ENCODE measurements at regions of chr16 and their contacts with region 1.

Region 1: DNA sequence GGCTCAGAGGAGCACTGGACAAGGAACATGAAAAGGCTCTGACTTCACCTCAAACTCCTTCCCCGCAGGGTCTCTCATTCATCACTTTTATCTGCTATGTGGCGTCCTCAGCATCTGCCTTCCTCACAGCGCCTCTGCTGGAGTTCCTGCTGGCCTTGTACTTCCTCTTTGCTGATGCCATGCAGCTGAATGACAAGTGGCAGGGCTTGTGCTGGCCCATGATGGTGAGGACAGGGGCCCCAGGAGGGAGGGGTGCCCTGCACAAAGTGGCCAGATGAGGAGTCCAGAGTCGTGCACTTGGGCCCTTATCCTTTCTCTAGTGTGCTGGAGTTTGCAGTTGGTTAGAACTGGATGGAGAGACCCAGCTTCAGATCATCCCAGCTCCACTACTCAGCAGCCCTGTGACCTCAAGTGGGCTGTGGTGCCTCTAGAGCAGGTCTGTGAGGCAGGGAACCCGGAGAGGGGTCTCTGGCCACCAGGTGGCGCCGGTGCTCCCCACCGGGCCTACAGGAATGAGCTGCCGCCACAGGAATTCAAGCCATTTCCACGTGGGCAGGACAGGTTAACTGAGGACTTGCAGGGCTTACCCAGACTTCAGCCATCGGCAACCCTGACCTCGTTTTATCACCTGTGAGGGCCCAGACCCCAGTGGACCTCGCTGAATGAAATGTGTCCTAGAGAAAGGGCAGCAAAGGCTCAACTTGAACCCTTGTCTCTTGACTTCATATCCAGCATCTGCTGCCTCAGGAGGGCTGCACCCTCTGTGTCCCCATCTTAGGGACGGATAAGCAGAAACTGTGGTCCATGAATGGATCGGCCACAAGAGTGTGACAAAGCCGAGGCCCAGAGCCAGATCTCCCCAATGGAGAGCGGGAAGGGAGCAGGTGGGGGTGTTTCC is 4.0 kb downstream of the CMTM3 start:
- DNase-seq: peak; percentile 85 to 93 (median 89)
- H3K4me3 ChIP-seq: no peak overlapping the region
- H3K27ac ChIP-seq: no peak overlapping the region
- H3K4me1 ChIP-seq: peaks cover 4% of the 10 kb centered on the region
- H3K27me3 ChIP-seq: no peaks in the 10 kb centered on the region
- CTCF ChIP-seq: peak; percentile 74 to 89 (median 80)
- EP300 ChIP-seq: no peak
- POLR2A ChIP-seq: no peak

Region 2: DNA sequence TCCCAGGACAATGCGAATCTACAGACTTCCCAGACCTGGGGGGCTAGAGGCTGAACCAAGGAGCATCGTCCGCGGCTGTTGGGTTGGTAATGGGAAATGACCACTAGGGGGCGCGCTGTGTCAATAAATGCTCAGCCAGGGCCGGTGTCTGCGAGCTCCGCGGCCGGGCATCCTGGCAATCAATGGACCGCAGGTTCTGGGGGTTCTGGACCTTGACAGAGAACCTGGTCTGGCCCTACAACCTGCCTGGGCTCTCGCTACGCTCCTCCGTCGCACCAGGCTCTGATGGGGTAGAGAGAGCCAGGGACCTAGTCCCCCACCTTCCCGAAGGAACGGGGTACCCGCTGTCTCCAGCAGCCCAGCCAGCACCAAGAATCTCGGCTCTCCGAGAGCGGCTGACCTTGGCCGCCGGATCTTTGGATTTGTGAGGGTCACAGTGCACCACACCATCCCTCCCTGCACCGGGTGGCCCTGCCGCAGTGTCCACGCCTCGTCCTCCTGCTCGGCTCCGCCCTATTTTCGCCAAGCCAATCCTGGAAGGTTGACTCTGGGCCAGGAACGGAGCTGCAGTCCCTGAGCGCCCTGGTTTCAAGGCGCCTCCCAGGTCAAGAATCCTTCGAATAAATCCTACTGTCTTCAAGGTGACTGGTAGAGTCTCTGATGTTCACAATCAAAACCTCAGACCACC is 201.8 kb before region 1 on chr16:
- intact Hi-C with region 1: loop called in 3 of 4 experiments (anchors 10 kb)
- DNase-seq: peak; percentile 81 to 92 (median 90)
- H3K4me3 ChIP-seq: peak overlapping the region; percentile 41
- H3K27ac ChIP-seq: no peak overlapping the region
- H3K4me1 ChIP-seq: peaks cover 2% of the 10 kb centered on the region
- H3K27me3 ChIP-seq: no peaks in the 10 kb centered on the region
- CTCF ChIP-seq: peak; percentile 84 to 94 (median 93)
- EP300 ChIP-seq: no peak
- POLR2A ChIP-seq: no peak

Region 3: DNA sequence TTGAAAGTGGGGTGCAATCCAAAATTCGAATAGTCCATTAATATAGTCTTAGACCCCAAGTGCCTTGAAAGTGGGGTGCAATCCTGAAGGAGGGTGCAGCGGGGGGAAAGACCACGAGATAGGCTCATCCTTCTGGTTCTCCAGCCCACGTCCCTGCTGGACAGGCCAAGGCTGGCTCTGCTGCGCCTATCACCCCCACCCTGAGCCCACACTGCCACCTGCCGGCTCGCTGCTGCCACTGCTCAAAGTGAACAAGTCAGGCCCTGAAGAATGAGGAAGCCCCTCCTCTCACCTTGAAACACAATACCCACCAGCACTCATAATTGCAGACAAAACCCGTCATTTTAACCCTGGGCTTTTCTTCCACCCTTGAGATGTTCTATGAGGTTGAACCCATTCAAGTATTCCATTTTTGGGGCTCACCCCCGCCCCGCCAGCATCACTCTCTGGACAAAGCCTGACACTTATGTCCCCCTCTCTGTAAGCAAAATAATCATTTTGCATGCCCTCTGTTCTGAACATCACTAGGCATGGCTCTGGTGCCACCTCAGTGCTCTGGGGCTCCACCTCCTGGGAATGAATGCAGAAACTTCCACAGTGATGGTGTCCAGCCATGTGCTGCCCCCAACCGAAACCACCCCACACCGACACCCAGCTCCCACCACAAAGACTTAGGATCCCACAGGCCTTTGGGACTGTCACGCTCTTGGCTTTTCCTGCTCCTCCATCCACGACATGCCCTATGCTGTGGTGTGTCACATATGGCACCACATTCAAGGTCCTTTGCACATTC is 124.6 kb before region 1 on chr16:
- intact Hi-C with region 1: loop called in 2 of 4 experiments (anchors 5 kb)
- DNase-seq: peak; percentile 67 to 85 (median 79)
- H3K4me3 ChIP-seq: no peak overlapping the region
- H3K27ac ChIP-seq: no peak overlapping the region
- H3K4me1 ChIP-seq: no peaks in the 10 kb centered on the region
- H3K27me3 ChIP-seq: no peaks in the 10 kb centered on the region
- CTCF ChIP-seq: peak; percentile 72 to 86 (median 85)
- EP300 ChIP-seq: no peak
- POLR2A ChIP-seq: no peak

Region 4: DNA sequence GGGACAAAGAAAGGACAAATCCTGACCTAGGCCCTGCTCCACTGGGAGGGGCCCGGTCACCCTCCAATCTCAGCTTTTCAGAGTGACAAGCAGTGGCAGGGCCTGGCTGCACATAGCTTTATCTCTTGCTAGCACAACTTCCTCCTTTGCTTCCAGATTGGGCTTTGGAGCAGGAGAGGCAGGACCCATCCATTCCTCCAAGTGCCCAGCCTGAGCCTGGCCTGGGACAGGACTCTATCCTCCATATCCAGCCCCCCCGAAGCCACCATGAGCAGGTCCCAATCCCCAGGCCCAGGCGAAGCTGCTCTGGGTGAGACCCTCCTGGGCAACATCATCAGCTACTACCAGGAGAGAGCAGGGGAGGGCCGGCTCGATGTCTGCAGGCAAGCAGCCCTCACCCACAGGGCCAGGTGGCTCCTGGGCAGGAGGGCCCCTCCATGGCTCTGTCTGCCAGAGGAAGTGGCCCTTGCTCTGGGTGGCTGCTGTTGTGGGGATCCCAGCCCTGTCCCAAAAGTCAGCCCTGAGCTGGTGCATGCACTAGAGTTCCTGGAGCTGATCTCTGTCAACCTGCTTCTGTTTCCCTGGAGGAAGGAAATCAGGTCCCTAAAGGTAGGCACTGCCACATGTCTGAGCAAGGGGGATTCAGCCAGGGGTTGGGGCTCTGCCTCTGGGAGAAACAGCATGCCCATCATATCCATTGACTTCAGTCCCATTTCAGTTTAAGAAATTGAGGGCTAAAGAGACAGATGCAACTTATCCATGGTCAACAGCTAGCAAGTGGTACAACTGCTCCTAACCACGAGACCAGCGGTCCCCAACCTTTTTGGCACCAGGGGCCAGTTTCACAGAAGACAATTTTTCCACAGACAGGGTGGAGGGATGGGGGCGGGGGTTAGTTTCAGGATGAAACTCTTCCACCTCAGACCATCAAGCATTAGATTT is 117.4 kb before region 1 on chr16:
- intact Hi-C with region 1: loop called in 2 of 4 experiments (anchors 5 to 10 kb)
- DNase-seq: peak in 1 of 5 donors; percentile 27
- H3K4me3 ChIP-seq: no peak overlapping the region
- H3K27ac ChIP-seq: no peak overlapping the region
- H3K4me1 ChIP-seq: no peaks in the 10 kb centered on the region
- H3K27me3 ChIP-seq: no peaks in the 10 kb centered on the region
- CTCF ChIP-seq: no peak
- EP300 ChIP-seq: no peak
- POLR2A ChIP-seq: no peak

Region 5: GRCh38 chr16:66541388-66542355 is 66.8 kb before region 1 on chr16:
- intact Hi-C with region 1: no loop called
- DNase-seq: no peak
- H3K4me3 ChIP-seq: no peak overlapping the region
- H3K27ac ChIP-seq: no peak overlapping the region
- H3K4me1 ChIP-seq: no peaks in the 10 kb centered on the region
- H3K27me3 ChIP-seq: no peaks in the 10 kb centered on the region
- CTCF ChIP-seq: no peak
- EP300 ChIP-seq: no peak
- POLR2A ChIP-seq: no peak

Region 6: DNA sequence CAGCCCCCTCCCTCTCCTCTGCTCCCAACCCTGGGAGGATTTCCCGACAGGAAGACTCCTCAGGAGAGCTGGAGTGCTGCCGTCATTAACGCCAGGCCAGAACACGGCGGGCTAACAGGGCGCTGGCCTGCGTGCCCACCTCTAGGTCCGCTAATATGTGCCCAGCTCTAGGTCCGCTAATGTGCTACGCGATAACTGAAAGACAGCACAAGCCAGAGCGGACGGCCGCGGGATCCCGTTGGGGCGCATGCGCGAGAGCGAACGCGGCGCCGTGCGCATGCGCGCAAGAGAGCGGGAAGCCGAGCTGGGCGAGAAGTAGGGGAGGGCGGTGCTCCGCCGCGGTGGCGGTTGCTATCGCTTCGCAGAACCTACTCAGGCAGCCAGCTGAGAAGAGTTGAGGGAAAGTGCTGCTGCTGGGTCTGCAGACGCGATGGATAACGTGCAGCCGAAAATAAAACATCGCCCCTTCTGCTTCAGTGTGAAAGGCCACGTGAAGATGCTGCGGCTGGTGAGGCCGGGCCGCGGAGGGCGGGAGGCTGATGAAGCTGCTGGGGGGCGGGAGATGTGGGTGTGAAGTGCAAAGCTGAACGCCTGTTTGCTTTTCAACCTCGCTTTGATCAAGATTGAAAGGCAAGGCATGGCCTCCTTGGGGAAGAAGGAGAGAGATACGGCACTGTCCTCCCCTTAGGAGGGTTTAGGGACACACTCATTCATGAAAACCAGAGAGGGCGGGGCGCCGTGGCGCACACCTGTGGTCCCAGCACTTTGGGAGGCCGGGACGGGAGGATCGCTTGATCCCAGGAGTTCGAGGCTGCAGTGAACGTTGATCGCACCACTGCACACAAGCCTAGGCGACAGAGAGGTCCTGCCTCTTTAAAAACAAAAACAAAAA is 56.0 kb before region 1 on chr16 and contains the start of gene CKLF:
- intact Hi-C with region 1: loop called in 2 of 4 experiments (anchors 2 to 10 kb)
- DNase-seq: peak; percentile 86 to 95 (median 92)
- H3K4me3 ChIP-seq: peak within 1 kb of the TSS; percentile 43
- H3K27ac ChIP-seq: peak within 1 kb of the TSS; percentile 90 to 96
- H3K4me1 ChIP-seq: peaks cover 7% of the 10 kb centered on the region
- H3K27me3 ChIP-seq: no peaks in the 10 kb centered on the region
- CTCF ChIP-seq: no peak
- EP300 ChIP-seq: no peak
- POLR2A ChIP-seq: peak; percentile 89
- total RNA-seq, gene CKLF: 22.3 to 46.8 (median 30.6) TPM

Region 7: DNA sequence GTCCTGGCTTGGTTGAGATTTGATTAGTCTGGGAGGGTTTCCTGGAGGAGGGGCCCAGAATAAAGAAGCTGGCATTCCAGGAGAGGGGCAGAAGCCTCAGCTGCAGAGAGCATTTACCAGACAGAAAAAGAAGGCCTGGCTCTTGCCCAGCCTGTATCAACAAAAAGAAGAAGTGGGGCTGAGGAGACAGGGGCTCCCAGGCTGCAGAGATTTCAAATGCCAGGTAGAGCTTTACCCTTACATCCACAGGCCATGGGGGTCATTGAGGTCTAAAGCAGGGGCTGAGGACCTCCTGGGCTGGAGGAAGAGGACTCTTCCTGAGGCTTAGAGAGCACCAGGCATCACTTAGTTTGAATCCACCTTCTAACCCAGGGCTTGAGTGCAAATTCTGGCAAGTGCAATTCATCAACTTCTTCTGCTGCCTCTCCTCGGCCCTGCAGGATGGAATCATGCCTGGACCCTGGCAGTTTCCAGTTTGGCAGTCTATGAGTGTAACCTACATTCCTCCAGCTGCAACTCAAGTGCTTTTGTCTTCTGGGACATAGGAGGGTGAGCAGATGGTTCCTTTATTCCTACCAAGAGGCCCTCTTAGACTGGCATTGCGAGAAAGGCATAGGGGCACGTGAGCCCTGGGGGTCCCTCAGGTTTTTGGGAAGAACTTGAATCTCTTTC is 251.0 kb after region 1 on chr16:
- intact Hi-C with region 1: loop called in 1 of 4 experiments (anchors 10 kb)
- DNase-seq: no peak
- H3K4me3 ChIP-seq: no peak overlapping the region
- H3K27ac ChIP-seq: no peak overlapping the region
- H3K4me1 ChIP-seq: no peaks in the 10 kb centered on the region
- H3K27me3 ChIP-seq: no peaks in the 10 kb centered on the region
- CTCF ChIP-seq: no peak
- EP300 ChIP-seq: no peak
- POLR2A ChIP-seq: no peak

Region 8: DNA sequence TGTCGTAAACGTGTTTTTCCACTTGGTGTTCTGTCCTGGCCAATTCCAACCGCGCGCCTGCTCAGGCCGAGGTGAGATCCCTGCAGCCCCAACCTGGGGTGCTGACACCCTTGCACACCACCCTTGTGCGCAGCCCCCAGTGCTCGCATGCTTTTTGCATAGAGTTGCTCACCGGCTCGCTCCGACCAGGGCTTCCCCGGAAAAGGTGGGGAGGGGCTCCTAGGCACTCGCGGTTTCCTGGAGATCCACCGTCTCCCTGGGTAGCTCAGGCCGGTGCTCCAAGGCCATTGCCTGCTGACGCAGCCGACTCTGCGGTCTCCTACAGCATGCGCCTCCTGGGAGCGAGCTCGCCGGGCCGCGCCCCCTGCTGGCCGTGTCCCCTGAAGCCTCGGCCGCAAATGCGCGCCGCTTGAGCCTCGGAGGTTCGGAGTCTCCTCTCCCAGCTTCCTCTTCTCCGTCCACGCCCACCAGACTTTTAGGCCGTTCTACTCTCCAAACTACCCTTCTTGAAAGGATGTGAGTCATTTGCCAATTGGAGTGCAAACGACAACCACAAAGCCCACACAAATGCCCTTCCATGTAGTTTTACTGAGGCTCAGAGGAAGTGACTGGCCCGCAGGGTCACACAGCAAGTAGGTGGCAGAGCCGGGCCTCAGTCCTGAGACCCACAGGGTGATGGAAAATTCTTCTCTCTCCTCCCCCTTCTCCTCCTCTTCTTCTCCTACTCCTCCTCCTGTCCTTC is 264.6 kb after region 1 on chr16:
- intact Hi-C with region 1: loop called in 2 of 4 experiments (anchors 5 to 10 kb)
- DNase-seq: peak; percentile 90 to 94 (median 92)
- H3K4me3 ChIP-seq: peak overlapping the region; percentile 23
- H3K27ac ChIP-seq: peak overlapping the region; percentile 60 to 67
- H3K4me1 ChIP-seq: peaks cover 3% of the 10 kb centered on the region
- H3K27me3 ChIP-seq: no peaks in the 10 kb centered on the region
- CTCF ChIP-seq: peak; percentile 83 to 93 (median 88)
- EP300 ChIP-seq: no peak
- POLR2A ChIP-seq: no peak

Measured in ovary (tissue), 10 donors.